ENCODE measurements at regions of chr17 and their contacts with region 1.

Region 1: GRCh38 chr17:47253541-47254402 is at the start of gene ITGB3:
- DNase-seq: peak; percentile 78
- ATAC-seq: peak; percentile 97
- H3K4me3 Mint-ChIP-seq: peak within 1 kb of the TSS; percentile 91
- H3K27ac Mint-ChIP-seq: peak within 1 kb of the TSS; percentile 74
- H3K4me1 Mint-ChIP-seq: peaks cover 17% of the 10 kb centered on the region
- H3K27me3 Mint-ChIP-seq: no peaks in the 10 kb centered on the region
- CTCF ChIP-seq: no peak
- total RNA-seq, gene ITGB3: 4.1 and 4.7 TPM in 2 replicates

Region 2: GRCh38 chr17:47188876-47189731 is 64.7 kb before region 1 on chr17 and contains the start of gene CDC27:
- CTCF ChIA-PET with region 1: no interaction called
- POLR2A ChIA-PET with region 1: no interaction called
- intact Hi-C with region 1: no loop called
- DNase-seq: peak; percentile 99
- ATAC-seq: peak; percentile 92
- H3K4me3 Mint-ChIP-seq: peak within 1 kb of the TSS; percentile 94
- H3K27ac Mint-ChIP-seq: peak within 1 kb of the TSS; percentile 92
- H3K4me1 Mint-ChIP-seq: peaks cover 57% of the 10 kb centered on the region
- H3K27me3 Mint-ChIP-seq: no peaks in the 10 kb centered on the region
- CTCF ChIP-seq: no peak
- total RNA-seq, gene CDC27: 72.5 and 76.5 TPM in 2 replicates

Region 3: DNA sequence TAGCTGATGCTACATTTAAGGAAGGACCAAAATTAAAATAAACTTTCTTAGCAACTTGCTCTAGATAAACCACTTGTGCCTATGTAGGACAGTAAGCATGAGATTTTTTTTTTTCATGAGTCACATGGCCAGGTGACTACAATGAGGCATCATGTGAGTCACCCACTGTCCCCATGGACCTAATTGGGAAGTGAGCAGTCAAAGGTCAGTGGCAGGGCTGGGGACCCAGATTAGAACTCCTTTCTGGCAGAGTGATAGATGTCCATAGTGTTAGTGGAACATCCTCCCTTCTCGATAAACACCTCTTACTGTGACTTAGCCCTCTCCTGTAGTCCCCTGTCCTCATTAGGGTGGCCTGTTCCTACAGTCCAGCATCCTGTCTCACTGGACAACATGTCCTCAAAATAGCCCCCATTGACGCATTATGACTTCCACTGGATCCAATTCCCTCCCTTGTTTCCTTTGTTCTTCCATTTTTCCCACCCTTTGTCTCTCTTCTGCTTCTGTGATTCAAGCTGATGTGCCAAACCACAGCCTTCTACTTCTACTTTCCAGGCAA is 12.3 kb after region 1 on chr17:
- CTCF ChIA-PET with region 1: no interaction called
- POLR2A ChIA-PET with region 1: interaction called, 4 read pairs
- intact Hi-C with region 1: loop called (anchors 1 kb)
- DNase-seq: no peak
- ATAC-seq: peak; percentile 89
- H3K4me3 Mint-ChIP-seq: peak overlapping the region; percentile 0
- H3K27ac Mint-ChIP-seq: peak overlapping the region; percentile 51
- H3K4me1 Mint-ChIP-seq: peaks cover 31% of the 10 kb centered on the region
- H3K27me3 Mint-ChIP-seq: no peaks in the 10 kb centered on the region
- CTCF ChIP-seq: no peak

Region 4: DNA sequence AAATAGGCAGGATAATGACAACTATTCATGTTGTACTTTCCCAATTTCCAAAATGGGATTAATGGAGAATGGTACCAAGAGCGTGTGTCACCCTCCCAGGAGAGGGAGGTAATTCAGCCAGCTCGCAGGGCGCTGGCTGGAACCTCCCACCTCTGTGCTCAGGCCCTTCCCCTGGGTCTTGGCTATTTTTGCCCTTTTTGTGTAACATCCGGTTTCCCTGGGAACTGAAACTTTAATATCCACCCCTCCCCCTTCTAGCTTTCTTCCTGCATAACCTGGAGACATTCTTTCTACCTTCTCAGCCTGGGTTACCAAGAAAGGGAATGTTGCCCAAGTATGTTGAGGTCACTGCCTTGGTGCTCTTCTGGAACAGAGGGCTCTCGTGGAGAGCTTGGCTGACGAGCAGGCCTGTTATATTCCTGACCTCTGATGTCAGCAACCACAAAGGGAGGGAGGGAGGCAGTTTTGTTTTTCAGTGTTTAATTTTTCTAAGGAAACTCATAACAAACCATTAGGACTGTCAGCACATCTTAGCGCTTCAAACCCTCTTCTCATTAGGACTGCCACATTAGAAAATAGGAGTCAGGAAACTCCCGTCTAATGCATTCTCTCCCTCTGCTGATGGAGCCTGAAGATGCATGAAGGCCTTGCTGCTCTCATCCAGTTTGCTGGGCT is 25.4 kb after region 1 on chr17:
- CTCF ChIA-PET with region 1: interaction called, 5 read pairs
- POLR2A ChIA-PET with region 1: interaction called, 3 read pairs
- intact Hi-C with region 1: loop called (anchors 2 kb)
- DNase-seq: peak; percentile 43
- ATAC-seq: peak; percentile 94
- H3K4me3 Mint-ChIP-seq: peak overlapping the region; percentile 78
- H3K27ac Mint-ChIP-seq: peak overlapping the region; percentile 80
- H3K4me1 Mint-ChIP-seq: peaks cover 72% of the 10 kb centered on the region
- H3K27me3 Mint-ChIP-seq: no peaks in the 10 kb centered on the region
- CTCF ChIP-seq: no peak

Region 5: DNA sequence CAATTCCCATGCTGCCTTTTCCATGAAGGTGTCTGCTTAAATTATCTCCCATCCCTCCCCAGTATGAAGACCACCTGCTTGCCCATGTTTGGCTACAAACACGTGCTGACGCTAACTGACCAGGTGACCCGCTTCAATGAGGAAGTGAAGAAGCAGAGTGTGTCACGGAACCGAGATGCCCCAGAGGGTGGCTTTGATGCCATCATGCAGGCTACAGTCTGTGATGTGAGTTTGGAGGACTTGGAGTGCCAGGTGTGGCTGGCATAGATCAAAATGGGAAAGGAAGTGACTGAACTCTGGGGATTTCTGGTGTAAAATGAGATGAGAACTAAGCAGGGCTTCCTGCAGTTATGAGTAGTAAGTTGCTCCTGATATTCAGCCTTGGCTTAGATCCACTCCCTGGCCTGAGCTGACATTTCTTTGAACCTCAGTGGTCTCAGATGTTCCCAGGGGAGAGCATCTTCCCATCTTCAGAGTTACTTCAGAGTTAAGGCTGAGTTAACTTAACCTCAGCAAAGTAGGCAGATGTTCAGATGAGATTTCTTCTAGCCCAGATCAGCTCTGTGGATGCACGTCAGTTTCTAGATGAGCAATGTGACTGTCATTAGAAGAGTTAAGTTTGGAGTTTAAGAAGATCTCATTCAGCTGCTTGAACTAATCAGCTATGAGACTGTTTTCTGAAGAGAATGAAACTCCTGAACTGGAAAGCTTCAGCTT is 32.6 kb after region 1 on chr17:
- CTCF ChIA-PET with region 1: interaction called, 4 read pairs
- POLR2A ChIA-PET with region 1: interaction called, 13 read pairs
- intact Hi-C with region 1: loop called (anchors 1 kb)
- DNase-seq: peak; percentile 50
- ATAC-seq: peak; percentile 84
- H3K4me3 Mint-ChIP-seq: peak overlapping the region; percentile 57
- H3K27ac Mint-ChIP-seq: peak overlapping the region; percentile 92
- H3K4me1 Mint-ChIP-seq: peaks cover 54% of the 10 kb centered on the region
- H3K27me3 Mint-ChIP-seq: no peaks in the 10 kb centered on the region
- CTCF ChIP-seq: no peak

Measured in activated B cell treated with CpG ODN at 0.5 μM for 24 hours (primary cell).